Activated CD4-positive, alpha-beta T cell treated with anti-CD3 and anti-CD28 coated beads for 36 hours (primary cell): ENCODE measurements at regions of chr11 and their contacts with region 1.

Region 1: DNA sequence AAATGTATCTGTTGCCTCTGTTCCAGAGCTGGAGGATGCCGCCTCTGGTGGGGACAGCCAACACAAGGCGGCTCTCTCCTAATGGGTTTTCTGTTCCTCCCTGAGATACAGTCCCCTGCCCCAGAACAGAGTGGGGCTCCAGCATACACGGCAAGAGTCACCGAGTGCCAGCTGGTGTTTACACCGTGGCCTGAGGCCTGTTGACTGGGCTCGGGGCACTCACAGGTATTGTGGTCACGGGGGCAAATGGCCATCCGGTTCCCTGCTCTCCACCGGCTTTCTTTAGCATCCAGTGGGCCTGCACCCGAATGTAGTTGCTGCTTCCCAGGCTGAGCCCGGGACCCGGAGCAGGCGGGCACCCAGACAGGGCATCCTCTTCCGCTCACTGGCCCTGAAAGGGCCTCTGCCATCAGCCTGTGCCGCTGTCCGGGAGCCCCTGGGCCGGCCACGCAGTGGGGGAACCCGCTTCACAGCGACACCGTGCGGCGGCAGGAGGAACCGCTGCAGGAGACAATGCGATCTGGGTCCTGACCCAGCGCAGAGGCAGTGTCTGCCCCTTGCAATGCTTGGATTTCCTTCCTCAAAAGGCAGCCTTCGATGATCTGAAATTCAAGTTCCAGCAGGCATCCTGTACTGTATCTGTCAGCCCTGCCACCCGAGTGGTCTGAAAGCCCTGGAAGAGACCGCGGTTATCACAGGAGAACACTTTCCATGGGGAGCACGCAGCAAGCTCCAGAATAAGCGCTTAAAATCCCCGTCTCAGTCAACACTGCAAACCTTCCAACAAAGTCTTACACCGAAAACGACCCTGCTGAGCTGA is 859 bp upstream of the KRTAP5-5 start:
- DNase-seq: peak; percentile 78
- ATAC-seq: peak; percentile 98
- H3K4me3 Mint-ChIP-seq: no peak overlapping the region
- H3K27ac Mint-ChIP-seq: no peak overlapping the region
- H3K4me1 Mint-ChIP-seq: peaks cover 5% of the 10 kb centered on the region
- H3K27me3 Mint-ChIP-seq: peaks cover 18% of the 10 kb centered on the region

Region 2: GRCh38 chr11:1546536-1547400 is 81.9 kb before region 1 on chr11:
- CTCF ChIA-PET with region 1: interaction called, 5 read pairs
- POLR2A ChIA-PET with region 1: no interaction called
- intact Hi-C with region 1: loop called (anchors 1 to 2 kb)
- DNase-seq: peak; percentile 72
- ATAC-seq: peak; percentile 87
- H3K4me3 Mint-ChIP-seq: peak overlapping the region; percentile 17
- H3K27ac Mint-ChIP-seq: no peak overlapping the region
- H3K4me1 Mint-ChIP-seq: peaks cover 2% of the 10 kb centered on the region
- H3K27me3 Mint-ChIP-seq: peaks cover 23% of the 10 kb centered on the region

Region 3: GRCh38 chr11:1598816-1599215 is 29.9 kb before region 1 on chr11:
- CTCF ChIA-PET with region 1: interaction called, 4 read pairs
- POLR2A ChIA-PET with region 1: no interaction called
- intact Hi-C with region 1: loop called in 1 of 2 experiments (anchors 1 kb)
- DNase-seq: no peak
- ATAC-seq: peak; percentile 42
- H3K4me3 Mint-ChIP-seq: no peak overlapping the region
- H3K27ac Mint-ChIP-seq: no peak overlapping the region
- H3K4me1 Mint-ChIP-seq: peaks cover 5% of the 10 kb centered on the region
- H3K27me3 Mint-ChIP-seq: peaks cover 39% of the 10 kb centered on the region

Region 4: DNA sequence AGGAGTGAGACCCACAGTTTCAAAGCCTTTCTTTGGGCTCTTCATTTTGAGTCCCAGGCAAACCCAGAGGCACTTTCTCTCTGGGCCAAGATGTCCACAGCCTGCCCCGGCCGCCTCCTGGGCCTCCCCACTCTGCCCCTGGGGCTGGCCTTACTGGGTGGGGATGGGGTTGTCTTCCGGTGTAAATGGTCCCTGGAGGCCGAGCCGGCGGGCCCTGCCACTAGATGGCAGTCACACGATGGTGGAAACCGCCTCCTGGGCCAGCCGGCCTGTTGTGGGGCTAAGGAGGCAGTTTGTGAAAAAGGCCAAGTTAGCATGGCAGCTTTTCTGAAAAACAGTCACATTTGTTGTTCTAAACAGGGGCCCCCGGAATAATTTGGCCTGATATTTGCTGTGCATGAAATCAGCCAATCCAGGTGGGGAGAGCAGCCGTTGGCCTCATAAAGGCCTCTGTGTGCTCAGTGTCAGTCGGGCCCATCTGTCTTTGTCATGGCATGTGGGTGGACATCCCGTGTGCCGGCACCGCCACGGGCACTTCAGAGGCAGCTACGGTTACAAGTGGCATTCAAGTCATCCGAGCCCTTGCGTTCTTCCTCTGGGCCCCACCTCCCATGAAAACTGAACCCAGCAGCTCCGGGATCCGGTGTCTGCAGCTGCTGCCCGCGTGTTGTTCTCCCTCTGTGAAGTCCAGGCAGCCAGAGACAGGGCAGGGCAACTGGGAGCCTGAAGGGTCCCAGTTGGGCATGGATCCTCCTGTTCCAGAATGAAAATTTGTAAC is 325.0 kb after region 1 on chr11:
- CTCF ChIA-PET with region 1: no interaction called
- POLR2A ChIA-PET with region 1: no interaction called
- intact Hi-C with region 1: no loop called
- DNase-seq: peak; percentile 12
- ATAC-seq: peak; percentile 64
- H3K4me3 Mint-ChIP-seq: no peak overlapping the region
- H3K27ac Mint-ChIP-seq: no peak overlapping the region
- H3K4me1 Mint-ChIP-seq: no peaks in the 10 kb centered on the region
- H3K27me3 Mint-ChIP-seq: no peaks in the 10 kb centered on the region